Caco-2 (cell line): ENCODE measurements at regions of chr4 and their contacts with region 1.

Region 1: DNA sequence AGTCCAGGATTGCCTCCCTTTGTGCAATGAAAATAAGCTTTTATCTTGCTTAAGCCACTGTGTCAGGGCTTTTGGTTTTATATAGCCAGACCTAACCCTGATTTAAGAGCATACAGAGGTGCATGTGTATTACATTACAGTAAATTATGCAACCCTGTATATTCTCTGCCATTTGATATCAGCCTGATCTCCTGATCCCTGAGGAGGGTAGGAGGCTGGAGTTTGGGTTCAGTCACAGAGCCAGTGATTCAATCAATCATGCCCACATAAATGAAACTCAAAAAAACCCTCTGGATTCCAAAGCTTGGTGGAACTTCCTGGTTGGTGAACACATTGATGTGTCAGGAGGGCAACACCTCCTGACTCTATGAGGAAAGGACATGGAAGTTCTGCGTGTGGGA is 7.3 kb upstream of the KLHL8 start:
- DNase-seq: no peak
- H3K4me3 ChIP-seq: no peak overlapping the region
- H3K4me3 Mint-ChIP-seq: no peak overlapping the region
- H3K27ac Mint-ChIP-seq: peak overlapping the region; percentile 71
- H3K4me1 ChIP-seq: peaks cover 45% of the 10 kb centered on the region
- H3K4me1 Mint-ChIP-seq: peaks cover 31% of the 10 kb centered on the region
- H3K27me3 ChIP-seq: no peaks in the 10 kb centered on the region
- H3K27me3 Mint-ChIP-seq: no peaks in the 10 kb centered on the region
- CTCF ChIP-seq: no peak

Region 2: DNA sequence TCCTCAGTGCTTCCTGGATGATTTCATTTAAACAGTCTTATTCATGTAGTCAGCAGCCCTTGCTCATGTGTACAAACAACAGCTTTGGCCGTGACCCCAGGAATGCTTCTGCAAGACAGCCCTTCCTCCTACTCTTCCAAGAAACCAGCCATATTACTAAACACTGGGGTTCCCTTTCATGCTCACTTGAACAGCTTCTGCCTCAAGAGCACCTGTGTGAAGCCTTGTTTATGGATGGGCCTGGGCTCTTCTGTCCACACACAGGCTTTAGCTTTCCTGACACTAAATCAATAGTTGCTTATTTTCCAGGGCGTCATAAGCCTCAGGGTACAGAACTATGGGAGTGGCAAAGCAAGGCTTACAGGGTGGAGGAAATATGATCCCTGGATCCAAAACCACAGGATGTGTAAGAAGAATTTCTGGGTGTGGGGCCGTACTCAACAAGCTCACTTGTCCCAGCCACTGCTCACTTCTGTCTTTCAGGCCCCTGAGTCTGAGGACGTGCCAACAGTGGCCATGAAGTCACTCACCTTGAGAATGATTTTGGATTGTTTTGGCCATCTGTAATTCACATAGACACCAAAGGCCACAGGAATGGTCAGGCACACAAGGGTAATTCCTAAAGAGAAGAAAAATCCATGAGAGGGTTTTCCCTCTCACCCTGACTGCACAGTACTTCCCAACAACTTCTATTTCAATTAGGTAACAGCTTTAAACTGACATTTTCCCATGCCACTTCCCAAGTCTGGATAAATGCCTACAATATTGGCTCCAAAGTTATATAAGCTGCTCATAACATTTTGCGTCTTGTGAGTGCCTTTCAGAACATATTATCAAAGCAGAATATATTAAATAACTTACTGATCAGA is 396.3 kb before region 1 on chr4:
- CTCF ChIA-PET with region 1: no interaction called
- POLR2A ChIA-PET with region 1: no interaction called
- intact Hi-C with region 1: no loop called
- DNase-seq: no peak
- H3K4me3 ChIP-seq: no peak overlapping the region
- H3K4me3 Mint-ChIP-seq: no peak overlapping the region
- H3K27ac Mint-ChIP-seq: no peak overlapping the region
- H3K4me1 ChIP-seq: no peaks in the 10 kb centered on the region
- H3K4me1 Mint-ChIP-seq: peaks cover 5% of the 10 kb centered on the region
- H3K27me3 ChIP-seq: no peaks in the 10 kb centered on the region
- H3K27me3 Mint-ChIP-seq: no peaks in the 10 kb centered on the region
- CTCF ChIP-seq: no peak

Region 3: DNA sequence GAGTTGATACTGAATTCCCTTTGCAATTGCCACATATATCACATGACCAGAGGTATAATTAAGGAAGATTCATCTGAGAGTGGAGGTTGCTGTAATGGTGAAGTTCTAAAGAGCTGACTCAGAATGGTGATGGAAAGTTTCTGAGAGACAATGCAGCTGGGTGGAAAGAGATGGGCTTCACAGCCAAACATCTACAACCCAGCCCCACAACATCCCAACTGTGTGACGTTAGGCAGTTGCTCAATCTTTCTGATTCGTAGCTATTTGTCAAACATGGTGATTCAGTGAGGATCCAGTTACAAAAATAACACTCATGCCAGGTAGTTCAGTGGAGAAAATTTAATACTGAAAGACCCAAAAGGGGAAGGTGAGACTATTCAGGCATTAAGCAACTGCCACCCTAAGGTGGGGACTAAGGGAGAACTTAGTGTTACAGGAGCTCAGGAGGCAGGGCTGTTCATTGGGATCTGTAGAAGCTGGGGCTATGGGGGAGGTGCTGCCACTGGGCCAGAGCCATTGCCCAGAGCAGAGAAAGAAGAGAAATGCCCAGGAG is 299.8 kb before region 1 on chr4:
- CTCF ChIA-PET with region 1: no interaction called
- POLR2A ChIA-PET with region 1: no interaction called
- intact Hi-C with region 1: loop called (anchors 2 kb)
- DNase-seq: peak in 1 of 2 experiments; percentile 12
- H3K4me3 ChIP-seq: no peak overlapping the region
- H3K4me3 Mint-ChIP-seq: no peak overlapping the region
- H3K27ac Mint-ChIP-seq: peak overlapping the region; percentile 84
- H3K4me1 ChIP-seq: peaks cover 29% of the 10 kb centered on the region
- H3K4me1 Mint-ChIP-seq: peaks cover 35% of the 10 kb centered on the region
- H3K27me3 ChIP-seq: no peaks in the 10 kb centered on the region
- H3K27me3 Mint-ChIP-seq: no peaks in the 10 kb centered on the region
- CTCF ChIP-seq: no peak

Region 4: GRCh38 chr4:87108142-87108546 is 119.6 kb before region 1 on chr4:
- CTCF ChIA-PET with region 1: no interaction called
- POLR2A ChIA-PET with region 1: interaction called, 10 read pairs
- intact Hi-C with region 1: no loop called
- DNase-seq: no peak
- H3K4me3 ChIP-seq: no peak overlapping the region
- H3K4me3 Mint-ChIP-seq: no peak overlapping the region
- H3K27ac Mint-ChIP-seq: no peak overlapping the region
- H3K4me1 ChIP-seq: peaks cover 46% of the 10 kb centered on the region
- H3K4me1 Mint-ChIP-seq: peaks cover 26% of the 10 kb centered on the region
- H3K27me3 ChIP-seq: no peaks in the 10 kb centered on the region
- H3K27me3 Mint-ChIP-seq: no peaks in the 10 kb centered on the region
- CTCF ChIP-seq: no peak

Region 5: DNA sequence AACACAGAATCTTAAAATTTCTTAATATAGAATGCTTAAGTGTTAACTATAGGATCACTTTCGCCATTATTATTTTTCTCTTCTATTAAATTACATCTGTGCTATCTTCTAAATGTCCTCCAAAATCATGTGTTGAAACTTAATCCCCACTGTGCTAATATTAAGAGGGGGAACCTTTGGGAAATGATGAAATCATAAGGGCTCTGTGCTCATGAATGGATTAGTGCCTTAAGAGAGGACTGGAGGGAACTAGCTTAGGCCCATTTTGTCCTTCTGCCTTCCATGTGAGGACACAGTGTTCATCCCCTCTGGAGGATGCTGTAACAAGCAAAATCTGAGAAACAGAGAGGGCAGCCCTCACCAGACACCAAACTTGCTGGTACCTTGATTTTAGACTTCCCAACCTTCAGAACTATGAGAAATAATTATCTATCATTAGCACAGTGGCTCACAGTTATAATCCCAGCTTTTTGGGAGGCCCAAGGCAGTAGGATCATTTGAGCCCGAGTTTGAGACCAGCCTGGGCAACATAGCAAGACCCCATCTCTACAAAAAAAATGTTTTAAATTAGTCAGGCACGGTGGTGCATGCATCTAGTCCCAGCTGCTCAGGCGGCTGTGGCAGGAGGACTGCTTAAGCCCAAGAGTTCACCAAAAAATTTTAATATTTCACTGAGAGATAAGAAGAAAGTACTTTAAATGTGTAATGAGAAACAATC is 33.6 kb before region 1 on chr4:
- CTCF ChIA-PET with region 1: no interaction called
- POLR2A ChIA-PET with region 1: no interaction called
- intact Hi-C with region 1: loop called (anchors 1 kb)
- DNase-seq: no peak
- H3K4me3 ChIP-seq: no peak overlapping the region
- H3K4me3 Mint-ChIP-seq: no peak overlapping the region
- H3K27ac Mint-ChIP-seq: no peak overlapping the region
- H3K4me1 ChIP-seq: no peaks in the 10 kb centered on the region; the same call in none of the 2 replicates
- H3K4me1 Mint-ChIP-seq: peaks cover under 1% of the 10 kb centered on the region
- H3K27me3 ChIP-seq: no peaks in the 10 kb centered on the region
- H3K27me3 Mint-ChIP-seq: no peaks in the 10 kb centered on the region
- CTCF ChIP-seq: no peak

Region 6: GRCh38 chr4:87688316-87688715 is 460.6 kb after region 1 on chr4:
- CTCF ChIA-PET with region 1: no interaction called
- POLR2A ChIA-PET with region 1: no interaction called
- intact Hi-C with region 1: no loop called
- DNase-seq: no peak
- H3K4me3 ChIP-seq: no peak overlapping the region
- H3K4me3 Mint-ChIP-seq: no peak overlapping the region
- H3K27ac Mint-ChIP-seq: no peak overlapping the region
- H3K4me1 ChIP-seq: no peaks in the 10 kb centered on the region
- H3K4me1 Mint-ChIP-seq: no peaks in the 10 kb centered on the region
- H3K27me3 ChIP-seq: no peaks in the 10 kb centered on the region
- H3K27me3 Mint-ChIP-seq: no peaks in the 10 kb centered on the region
- CTCF ChIP-seq: no peak